MCF 10A (cell line): ENCODE measurements at regions of chrX and their contacts with region 1.

Region 1: GRCh38 chrX:40647307-40648197 is at the start of gene CXorf38:
- DNase-seq: peak; percentile 81
- H3K4me3 Mint-ChIP-seq: peak within 1 kb of the TSS; percentile 85
- H3K27ac Mint-ChIP-seq: peak within 1 kb of the TSS; percentile 90
- H3K4me1 Mint-ChIP-seq: peaks cover 9% of the 10 kb centered on the region
- H3K27me3 Mint-ChIP-seq: peaks cover 42% of the 10 kb centered on the region
- CTCF ChIP-seq: no peak
- total RNA-seq, gene CXorf38: 21.4 and 21.9 TPM in 2 replicates

Region 2: DNA sequence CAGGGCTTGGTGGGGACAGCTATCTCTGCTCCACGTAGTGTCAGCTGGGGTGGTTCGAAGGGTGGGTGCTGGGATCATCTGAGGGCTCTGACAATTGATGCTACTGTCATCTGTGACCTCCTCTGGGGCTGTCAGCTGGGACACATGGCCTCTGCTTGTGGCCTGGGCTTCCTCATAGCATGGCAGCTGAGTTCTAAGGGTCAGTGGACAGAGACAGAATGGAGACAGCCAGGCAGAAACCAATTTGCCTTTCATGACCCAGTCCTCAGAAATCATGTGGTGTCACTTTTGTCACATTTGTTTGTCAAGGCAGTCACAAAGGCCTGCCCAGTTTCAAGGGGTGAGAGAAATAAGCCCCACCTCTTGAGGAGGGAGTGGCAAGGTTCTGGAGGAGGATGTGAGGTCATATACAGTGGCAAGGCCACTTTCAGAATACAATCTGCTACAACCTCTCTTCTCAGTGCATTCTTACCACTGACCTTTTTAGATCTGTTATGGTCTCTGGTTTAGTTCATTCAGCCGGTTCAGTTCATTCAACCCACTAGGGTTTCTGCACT is 446.1 kb before region 1 on chrX:
- CTCF ChIA-PET with region 1: no interaction called
- POLR2A ChIA-PET with region 1: no interaction called
- intact Hi-C with region 1: no loop called
- DNase-seq: no peak
- H3K4me3 Mint-ChIP-seq: no peak overlapping the region
- H3K27ac Mint-ChIP-seq: no peak overlapping the region
- H3K4me1 Mint-ChIP-seq: no peaks in the 10 kb centered on the region
- H3K27me3 Mint-ChIP-seq: peaks cover 19% of the 10 kb centered on the region
- CTCF ChIP-seq: no peak

Region 3: DNA sequence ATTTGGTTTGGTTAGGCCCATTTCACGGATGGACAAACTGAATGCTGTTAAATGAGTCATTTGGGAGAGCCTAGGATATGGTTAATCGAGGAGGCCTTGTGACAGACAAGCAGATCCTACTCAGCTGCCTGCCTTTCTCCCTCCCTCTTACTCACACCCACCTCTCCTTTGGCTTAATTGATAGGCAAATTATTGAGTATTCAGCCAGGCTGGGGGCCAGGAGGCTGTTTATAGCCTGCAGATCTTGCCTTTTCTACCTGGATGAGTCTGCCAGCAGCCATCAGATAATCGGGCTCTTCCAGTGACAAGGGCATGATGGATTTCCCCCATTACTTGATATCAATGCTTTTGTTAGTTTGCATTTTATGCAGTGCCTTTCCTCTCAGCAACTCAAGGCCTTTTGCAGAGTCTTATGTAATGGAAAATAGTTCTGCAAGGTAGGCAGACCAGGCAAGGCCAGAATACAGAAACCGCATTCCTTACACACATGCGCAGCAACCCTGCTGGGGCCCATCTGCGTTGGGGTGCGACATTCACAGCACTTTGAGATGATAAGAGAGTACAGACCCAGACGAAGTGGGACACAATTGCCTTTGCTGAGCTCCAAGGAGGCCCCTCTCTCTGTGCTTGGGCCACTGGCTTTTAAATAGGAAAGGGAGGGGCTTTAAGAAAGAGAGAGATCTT is 163.0 kb before region 1 on chrX:
- CTCF ChIA-PET with region 1: no interaction called
- POLR2A ChIA-PET with region 1: no interaction called
- intact Hi-C with region 1: no loop called
- DNase-seq: no peak
- H3K4me3 Mint-ChIP-seq: no peak overlapping the region
- H3K27ac Mint-ChIP-seq: no peak overlapping the region
- H3K4me1 Mint-ChIP-seq: no peaks in the 10 kb centered on the region
- H3K27me3 Mint-ChIP-seq: peaks cover 77% of the 10 kb centered on the region
- CTCF ChIP-seq: no peak

Region 4: DNA sequence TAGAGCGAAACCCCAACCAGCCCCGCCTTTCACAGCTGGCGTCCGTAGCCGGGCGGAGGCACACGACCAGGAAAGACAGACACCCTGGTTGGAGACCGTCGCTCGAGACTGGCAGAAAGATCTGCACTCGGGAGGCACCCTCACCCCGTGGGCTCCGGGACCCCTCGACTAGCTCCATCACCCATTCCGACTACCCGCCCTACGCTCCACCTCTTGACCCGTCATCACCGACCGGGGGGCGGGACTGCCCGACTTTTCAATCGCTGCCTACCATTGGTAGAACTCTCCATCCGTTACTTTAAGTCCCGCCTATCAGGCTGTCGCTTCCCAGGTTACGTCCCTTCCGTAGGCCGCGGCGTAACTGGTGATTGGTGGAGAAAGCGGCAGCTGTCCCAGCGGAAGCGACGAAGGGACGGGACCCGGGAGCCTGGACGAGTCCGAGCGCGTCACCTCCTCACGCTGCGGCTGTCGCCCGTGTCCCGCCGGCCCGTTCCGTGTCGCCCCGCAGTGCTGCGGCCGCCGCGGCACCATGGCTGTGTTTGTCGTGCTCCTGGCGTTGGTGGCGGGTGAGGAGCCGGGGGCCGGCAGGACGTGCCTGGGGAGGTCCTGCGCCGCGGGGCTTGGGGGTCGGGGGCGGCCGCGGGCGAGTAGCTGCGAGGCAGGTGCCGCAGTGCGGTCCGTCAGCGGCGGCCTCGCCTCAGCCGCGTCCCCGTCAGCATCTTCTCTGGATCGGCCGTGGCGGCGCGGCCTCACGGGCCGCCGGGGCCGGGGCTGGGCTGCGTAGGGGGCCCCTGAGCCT is 66.8 kb before region 1 on chrX and contains the start of gene ATP6AP2:
- CTCF ChIA-PET with region 1: no interaction called
- POLR2A ChIA-PET with region 1: interaction called, 18 read pairs
- intact Hi-C with region 1: no loop called
- DNase-seq: peak; percentile 92
- H3K4me3 Mint-ChIP-seq: peak within 1 kb of the TSS; percentile 91
- H3K27ac Mint-ChIP-seq: peak within 1 kb of the TSS; percentile 95
- H3K4me1 Mint-ChIP-seq: peaks cover 14% of the 10 kb centered on the region
- H3K27me3 Mint-ChIP-seq: peaks cover 49% of the 10 kb centered on the region
- CTCF ChIP-seq: no peak
- total RNA-seq, gene ATP6AP2: 69.4 and 84.7 TPM in 2 replicates

Region 5: DNA sequence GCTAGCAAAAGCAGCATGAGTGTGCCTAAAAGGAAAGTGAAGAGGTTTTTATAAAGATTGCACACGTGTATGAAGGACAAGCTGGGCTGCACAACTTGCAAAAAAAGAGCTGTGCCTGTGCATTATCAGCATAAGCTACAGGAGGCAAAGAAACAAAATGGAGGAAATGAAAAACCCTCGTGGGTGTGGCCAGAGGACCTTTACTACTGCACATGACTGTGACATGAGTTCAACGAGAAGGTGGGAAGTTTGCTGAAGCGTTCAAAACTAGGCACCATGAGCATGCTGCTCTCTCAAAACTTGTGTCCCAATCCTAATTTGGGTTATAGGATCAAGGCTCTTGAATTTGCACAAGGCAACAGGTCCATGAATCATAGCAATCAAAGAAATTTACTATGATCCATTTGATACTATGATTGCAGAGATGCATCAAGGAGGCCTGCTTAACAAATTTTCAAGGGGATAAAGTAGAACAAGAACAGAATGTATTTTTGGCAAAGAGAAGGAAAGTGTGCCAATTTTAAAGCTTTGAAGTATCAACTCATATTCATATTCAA is 37.9 kb after region 1 on chrX:
- CTCF ChIA-PET with region 1: interaction called, 13 read pairs
- POLR2A ChIA-PET with region 1: no interaction called
- intact Hi-C with region 1: no loop called
- DNase-seq: no peak
- H3K4me3 Mint-ChIP-seq: no peak overlapping the region
- H3K27ac Mint-ChIP-seq: no peak overlapping the region
- H3K4me1 Mint-ChIP-seq: no peaks in the 10 kb centered on the region
- H3K27me3 Mint-ChIP-seq: peaks cover 45% of the 10 kb centered on the region
- CTCF ChIP-seq: no peak

Region 6: DNA sequence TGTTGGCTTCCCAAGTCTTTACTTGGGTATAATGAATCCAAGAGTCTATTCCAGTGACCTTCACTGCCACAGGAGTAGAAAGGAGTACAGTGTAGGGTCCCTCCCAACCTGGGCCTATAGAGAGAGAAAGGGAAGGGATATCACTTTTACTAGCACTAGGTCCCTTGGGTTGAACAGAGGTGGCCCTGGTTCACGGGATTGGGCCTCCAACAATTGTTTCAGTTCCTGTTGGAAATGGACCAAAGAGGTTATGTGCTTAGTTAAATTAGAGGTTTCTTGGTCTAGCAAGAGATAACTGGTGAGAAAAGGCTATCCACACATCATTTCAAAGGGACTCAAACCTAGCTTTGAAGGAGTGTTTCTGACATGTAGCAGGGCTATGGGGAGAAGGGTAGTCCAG is 144.9 kb after region 1 on chrX:
- CTCF ChIA-PET with region 1: interaction called, 51 read pairs
- POLR2A ChIA-PET with region 1: no interaction called
- intact Hi-C with region 1: loop called (anchors 1 kb)
- DNase-seq: no peak
- H3K4me3 Mint-ChIP-seq: no peak overlapping the region
- H3K27ac Mint-ChIP-seq: no peak overlapping the region
- H3K4me1 Mint-ChIP-seq: peaks cover 9% of the 10 kb centered on the region
- H3K27me3 Mint-ChIP-seq: peaks cover 77% of the 10 kb centered on the region
- CTCF ChIP-seq: no peak

Region 7: GRCh38 chrX:41180194-41180908 is 532.8 kb after region 1 on chrX:
- CTCF ChIA-PET with region 1: interaction called, 5 read pairs
- POLR2A ChIA-PET with region 1: interaction called, 3 read pairs
- intact Hi-C with region 1: loop called (anchors 1 kb)
- DNase-seq: peak; percentile 66
- H3K4me3 Mint-ChIP-seq: no peak overlapping the region
- H3K27ac Mint-ChIP-seq: no peak overlapping the region
- H3K4me1 Mint-ChIP-seq: no peaks in the 10 kb centered on the region
- H3K27me3 Mint-ChIP-seq: no peaks in the 10 kb centered on the region
- CTCF ChIP-seq: peak; percentile 61

Region 8: GRCh38 chrX:42276982-42277690 is 1629.6 kb after region 1 on chrX:
- CTCF ChIA-PET with region 1: no interaction called
- POLR2A ChIA-PET with region 1: no interaction called
- intact Hi-C with region 1: no loop called
- DNase-seq: no peak
- H3K4me3 Mint-ChIP-seq: no peak overlapping the region
- H3K27ac Mint-ChIP-seq: no peak overlapping the region
- H3K4me1 Mint-ChIP-seq: no peaks in the 10 kb centered on the region
- H3K27me3 Mint-ChIP-seq: peaks cover 39% of the 10 kb centered on the region
- CTCF ChIP-seq: no peak